ENCODE measurements at regions of chr20 and their contacts with region 1.

Region 1: DNA sequence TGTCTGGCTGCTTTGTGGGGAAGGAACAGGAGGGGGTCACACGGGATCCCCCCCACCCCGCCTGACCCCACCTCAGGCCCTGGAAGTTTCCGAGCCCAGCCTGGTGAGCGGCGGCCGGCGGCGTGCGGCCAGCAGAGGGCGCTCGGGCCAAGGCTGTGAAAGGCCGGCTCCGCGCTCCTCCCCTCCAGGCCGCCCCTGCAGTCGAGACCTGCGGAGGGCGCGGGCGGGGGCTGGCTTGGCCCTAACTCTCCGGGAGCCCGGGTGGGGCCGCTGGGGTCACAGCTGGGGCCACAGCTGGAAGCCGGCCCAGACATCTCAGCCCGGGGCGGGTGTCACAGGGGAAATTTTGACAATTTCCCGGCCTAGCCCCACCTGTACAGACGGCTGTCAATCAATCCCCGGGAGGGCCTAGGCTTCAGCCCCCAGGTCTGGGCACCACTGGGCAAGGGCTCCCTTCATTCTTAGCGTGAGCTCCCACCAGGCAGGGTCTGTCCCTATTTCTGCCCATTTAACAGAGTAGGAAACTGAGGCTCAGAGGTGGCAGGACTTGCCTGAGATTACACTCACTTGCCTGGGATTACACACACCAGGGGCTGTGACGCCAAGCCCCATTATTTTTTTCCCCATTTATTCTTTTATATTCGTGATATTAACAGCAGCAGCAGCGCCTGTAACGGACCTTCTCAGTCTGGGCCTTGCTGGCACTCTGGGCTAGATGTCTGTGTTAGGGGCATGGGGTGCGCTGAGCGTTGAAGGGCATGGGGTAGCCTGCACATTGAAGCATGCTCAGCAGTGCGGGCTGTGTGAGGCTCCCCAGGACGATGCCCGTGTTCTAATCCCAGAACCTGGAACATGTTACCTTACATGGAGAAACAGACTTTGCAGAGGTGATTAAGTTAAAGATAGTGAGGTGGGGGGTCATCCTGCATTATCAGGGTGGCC is 23.0 kb downstream of the ZBP1 start:
- DNase-seq: peak; percentile 49
- H3K4me3 Mint-ChIP-seq: no peak overlapping the region
- H3K27ac Mint-ChIP-seq: no peak overlapping the region
- H3K4me1 Mint-ChIP-seq: peaks cover 5% of the 10 kb centered on the region
- H3K27me3 Mint-ChIP-seq: peaks cover 12% of the 10 kb centered on the region
- CTCF ChIP-seq: peak; percentile 85

Region 2: GRCh38 chr20:57514273-57514751 is 83.0 kb before region 1 on chr20:
- CTCF ChIA-PET with region 1: interaction called, 131 read pairs
- POLR2A ChIA-PET with region 1: interaction called, 5 read pairs
- intact Hi-C with region 1: loop called (anchors 1 kb)
- DNase-seq: peak; percentile 67
- H3K4me3 Mint-ChIP-seq: no peak overlapping the region
- H3K27ac Mint-ChIP-seq: no peak overlapping the region
- H3K4me1 Mint-ChIP-seq: no peaks in the 10 kb centered on the region
- H3K27me3 Mint-ChIP-seq: peaks cover 30% of the 10 kb centered on the region
- CTCF ChIP-seq: peak; percentile 79

Region 3: GRCh38 chr20:57536771-57537724 is 60.2 kb before region 1 on chr20:
- CTCF ChIA-PET with region 1: interaction called, 10 read pairs
- POLR2A ChIA-PET with region 1: no interaction called
- intact Hi-C with region 1: no loop called
- DNase-seq: no peak
- H3K4me3 Mint-ChIP-seq: no peak overlapping the region
- H3K27ac Mint-ChIP-seq: no peak overlapping the region
- H3K4me1 Mint-ChIP-seq: no peaks in the 10 kb centered on the region
- H3K27me3 Mint-ChIP-seq: peaks cover 100% of the 10 kb centered on the region
- CTCF ChIP-seq: no peak

Region 4: DNA sequence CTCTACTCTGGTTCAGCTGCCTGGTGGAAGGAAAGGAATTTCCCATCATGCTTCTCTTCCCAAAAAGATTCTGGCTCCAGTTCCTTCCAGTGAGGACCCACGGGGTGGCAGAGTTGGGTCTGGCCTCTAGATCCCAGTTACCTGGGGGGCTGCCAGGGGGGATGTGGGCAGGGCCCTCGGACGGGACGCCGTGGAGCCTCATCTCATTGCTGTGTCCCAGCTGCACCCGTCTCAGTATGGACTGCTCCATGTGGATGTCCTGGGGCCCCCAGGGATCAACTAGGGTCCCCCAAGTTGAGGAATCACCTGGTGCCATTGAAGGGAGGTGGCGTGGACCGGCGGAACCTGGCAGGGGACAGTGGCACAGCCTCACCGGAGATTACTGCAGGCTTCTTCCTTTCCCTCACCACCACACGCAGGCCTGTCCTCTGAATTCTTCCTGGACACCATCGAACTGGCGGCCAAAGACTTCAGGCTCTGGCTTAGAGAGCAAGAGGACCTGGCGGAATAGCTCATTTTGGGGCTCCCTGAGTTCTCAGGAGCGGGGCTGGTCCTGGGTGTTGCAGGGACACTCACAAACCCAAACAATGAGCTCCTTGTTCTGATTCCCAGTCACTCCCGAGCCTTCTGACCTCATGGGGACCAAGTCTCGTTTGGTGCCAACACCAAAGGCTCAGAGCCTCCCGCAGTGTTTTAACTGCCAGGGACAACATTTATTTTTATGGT is 14.5 kb after region 1 on chr20:
- CTCF ChIA-PET with region 1: interaction called, 12 read pairs
- POLR2A ChIA-PET with region 1: no interaction called
- intact Hi-C with region 1: no loop called
- DNase-seq: no peak
- H3K4me3 Mint-ChIP-seq: no peak overlapping the region
- H3K27ac Mint-ChIP-seq: no peak overlapping the region
- H3K4me1 Mint-ChIP-seq: no peaks in the 10 kb centered on the region
- H3K27me3 Mint-ChIP-seq: peaks cover 46% of the 10 kb centered on the region
- CTCF ChIP-seq: no peak

Region 5: DNA sequence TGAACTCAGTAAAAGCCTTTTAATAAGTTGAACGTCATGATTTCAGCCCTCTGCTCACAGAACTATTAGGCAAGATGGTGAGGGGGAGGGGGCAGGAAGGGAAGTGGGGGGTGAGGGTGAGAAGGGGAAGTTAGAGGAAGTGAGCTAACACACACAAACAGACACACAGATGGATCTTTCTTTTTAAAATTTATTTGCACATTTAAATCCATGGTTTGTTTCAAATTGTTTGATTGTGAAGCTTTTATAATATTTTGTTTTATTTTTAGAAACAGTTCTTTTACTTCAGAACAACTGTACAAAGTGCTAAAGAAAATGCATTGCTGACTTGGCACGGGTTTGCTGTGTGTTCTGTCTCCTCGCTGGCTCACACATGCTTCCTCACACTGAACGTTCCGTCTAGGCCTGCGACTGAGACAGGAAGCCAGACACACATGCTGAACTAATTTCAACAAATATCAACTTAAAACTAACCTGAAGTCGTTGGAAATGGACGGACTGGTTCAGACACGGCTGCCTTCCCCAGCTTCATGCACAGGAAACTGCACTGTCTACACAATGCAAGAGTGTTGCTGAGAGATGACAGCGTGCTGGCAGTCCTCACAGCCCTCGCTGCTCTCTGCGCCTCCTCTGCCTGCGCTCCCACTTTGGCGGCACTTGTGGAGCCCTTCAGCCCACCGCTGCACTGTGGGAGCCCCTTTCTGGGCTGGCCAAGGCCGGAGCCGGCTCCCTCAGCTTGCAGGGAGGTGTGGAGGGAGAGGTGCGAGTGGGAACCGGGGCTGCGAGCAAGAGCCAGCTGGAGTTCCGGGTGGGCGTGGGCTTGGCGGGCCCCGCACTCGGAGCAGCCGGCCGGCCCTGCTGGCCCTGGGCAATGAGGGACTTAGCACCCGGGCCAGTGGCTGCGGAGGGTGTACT is 31.0 kb after region 1 on chr20:
- CTCF ChIA-PET with region 1: interaction called, 19 read pairs
- POLR2A ChIA-PET with region 1: no interaction called
- intact Hi-C with region 1: no loop called
- DNase-seq: no peak
- H3K4me3 Mint-ChIP-seq: no peak overlapping the region
- H3K27ac Mint-ChIP-seq: no peak overlapping the region
- H3K4me1 Mint-ChIP-seq: no peaks in the 10 kb centered on the region
- H3K27me3 Mint-ChIP-seq: peaks cover 36% of the 10 kb centered on the region
- CTCF ChIP-seq: no peak

Region 6: DNA sequence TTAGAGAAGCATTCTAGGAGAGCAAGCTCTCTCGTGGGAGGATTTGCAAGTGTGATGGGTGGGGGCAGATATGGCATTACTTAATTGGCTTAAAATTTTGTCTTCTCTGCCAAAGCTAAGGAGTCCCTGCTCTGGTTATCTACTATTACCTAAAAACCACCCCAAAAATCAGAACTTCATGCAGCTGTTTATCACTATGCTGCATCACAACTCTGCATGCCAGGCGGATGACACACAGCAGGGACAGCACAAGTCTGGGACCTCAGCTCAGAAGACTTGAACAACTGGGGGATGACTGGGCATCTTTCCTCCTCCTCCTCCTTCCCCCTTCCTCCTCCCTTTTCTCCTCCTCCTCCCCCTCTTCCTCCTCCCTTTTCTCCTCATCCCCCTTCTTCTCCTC is 330.9 kb after region 1 on chr20:
- CTCF ChIA-PET with region 1: no interaction called
- POLR2A ChIA-PET with region 1: no interaction called
- intact Hi-C with region 1: no loop called
- DNase-seq: no peak
- H3K4me3 Mint-ChIP-seq: no peak overlapping the region
- H3K27ac Mint-ChIP-seq: no peak overlapping the region
- H3K4me1 Mint-ChIP-seq: no peaks in the 10 kb centered on the region
- H3K27me3 Mint-ChIP-seq: peaks cover 57% of the 10 kb centered on the region
- CTCF ChIP-seq: no peak

Region 7: DNA sequence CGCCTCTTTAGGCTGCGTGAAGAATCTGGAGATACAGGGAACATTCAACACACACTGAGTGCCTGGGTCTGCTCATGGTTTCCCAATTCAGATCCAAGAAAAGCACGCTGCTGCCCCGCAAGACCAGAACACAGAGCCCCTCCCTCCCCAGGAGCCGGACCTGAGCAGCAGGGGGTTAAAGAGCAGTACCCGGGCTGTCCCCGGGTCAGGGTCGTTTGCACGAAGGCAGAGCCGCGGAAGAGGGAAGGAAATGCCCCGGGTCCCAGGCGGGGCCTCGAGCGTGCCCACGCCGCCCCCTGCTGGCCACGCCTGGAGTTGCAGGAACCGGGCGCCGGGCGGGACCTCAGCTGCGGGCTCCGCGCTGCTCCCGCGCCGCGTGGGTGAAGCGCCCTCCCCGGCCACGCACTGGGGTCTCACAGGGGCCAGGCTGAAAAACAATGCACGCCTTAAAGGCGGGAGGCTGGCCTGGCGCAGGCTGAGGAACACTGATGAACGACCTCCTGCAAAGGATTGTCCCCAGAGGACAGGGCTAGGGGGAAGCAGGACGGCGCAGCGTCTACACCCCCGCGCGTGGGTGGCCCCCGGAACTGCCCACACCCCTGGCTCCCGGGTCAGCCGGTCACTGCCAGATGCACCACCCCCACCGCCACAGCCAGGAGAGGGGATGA is 582.3 kb after region 1 on chr20:
- CTCF ChIA-PET with region 1: interaction called, 52 read pairs
- POLR2A ChIA-PET with region 1: no interaction called
- intact Hi-C with region 1: loop called (anchors 1 kb)
- DNase-seq: peak; percentile 40
- H3K4me3 Mint-ChIP-seq: no peak overlapping the region
- H3K27ac Mint-ChIP-seq: no peak overlapping the region
- H3K4me1 Mint-ChIP-seq: no peaks in the 10 kb centered on the region
- H3K27me3 Mint-ChIP-seq: peaks cover 32% of the 10 kb centered on the region
- CTCF ChIP-seq: peak; percentile 99

Measured in MCF 10A (cell line).